ENCODE measurements at regions of chr9 and their contacts with region 1.

Region 1: GRCh38 chr9:137672907-137673791 is 54.3 kb downstream of the EHMT1 start:
- DNase-seq: peak in 7 of 9 donors; percentile 34 to 70 (median 59)
- ATAC-seq: peak; percentile 88
- H3K4me3 ChIP-seq: no peak overlapping the region
- H3K4me3 Mint-ChIP-seq: peak overlapping the region in 2 of 10 donors; percentile 29 to 37
- H3K27ac ChIP-seq: no peak overlapping the region
- H3K27ac Mint-ChIP-seq: peak overlapping the region in 5 of 9 donors; percentile 11 to 73 (median 28)
- H3K4me1 ChIP-seq: peaks cover 9 to 13% of the 10 kb centered on the region in 2 donors
- H3K4me1 Mint-ChIP-seq: peaks cover 29 to 68% (median 58%) of the 10 kb centered on the region in 7 donors
- H3K27me3 ChIP-seq: no peaks in the 10 kb centered on the region
- H3K27me3 Mint-ChIP-seq: no peaks in the 10 kb centered on the region

Region 2: DNA sequence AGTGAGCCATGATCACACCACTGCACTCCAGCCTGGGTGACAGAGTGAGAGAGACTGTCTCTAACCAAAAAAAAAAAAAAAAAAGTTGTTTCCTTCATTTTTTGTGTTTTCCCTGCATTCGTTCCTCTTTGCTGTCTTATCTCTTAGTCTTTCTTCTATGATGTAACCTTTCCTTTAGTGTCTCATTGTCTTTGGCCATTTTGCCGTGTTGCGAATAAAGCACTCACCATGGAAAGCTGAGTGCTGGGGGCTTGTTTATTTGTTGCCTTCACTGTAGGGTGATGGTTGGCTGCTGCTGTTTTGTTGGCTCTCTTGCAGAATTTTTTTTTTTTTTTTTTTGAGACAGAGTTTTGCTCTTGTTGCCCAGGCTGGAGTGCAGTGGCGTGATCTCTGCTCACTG is 46.7 kb before region 1 on chr9:
- CTCF ChIA-PET with region 1: interaction called, 4 read pairs
- POLR2A ChIA-PET with region 1: no interaction called
- intact Hi-C with region 1: loop called in 1 of 2 experiments (anchors 5 kb)
- DNase-seq: no peak
- ATAC-seq: no peak
- H3K4me3 ChIP-seq: no peak overlapping the region
- H3K4me3 Mint-ChIP-seq: peak overlapping the region; percentile 15 to 73 (median 50)
- H3K27ac ChIP-seq: no peak overlapping the region
- H3K27ac Mint-ChIP-seq: peak overlapping the region in 7 of 9 donors; percentile 25 to 91 (median 73)
- H3K4me1 ChIP-seq: peaks cover 10 to 51% of the 10 kb centered on the region in 2 donors
- H3K4me1 Mint-ChIP-seq: peaks cover 37 to 76% (median 52%) of the 10 kb centered on the region in 7 donors
- H3K27me3 ChIP-seq: no peaks in the 10 kb centered on the region
- H3K27me3 Mint-ChIP-seq: no peaks in the 10 kb centered on the region

Region 3: DNA sequence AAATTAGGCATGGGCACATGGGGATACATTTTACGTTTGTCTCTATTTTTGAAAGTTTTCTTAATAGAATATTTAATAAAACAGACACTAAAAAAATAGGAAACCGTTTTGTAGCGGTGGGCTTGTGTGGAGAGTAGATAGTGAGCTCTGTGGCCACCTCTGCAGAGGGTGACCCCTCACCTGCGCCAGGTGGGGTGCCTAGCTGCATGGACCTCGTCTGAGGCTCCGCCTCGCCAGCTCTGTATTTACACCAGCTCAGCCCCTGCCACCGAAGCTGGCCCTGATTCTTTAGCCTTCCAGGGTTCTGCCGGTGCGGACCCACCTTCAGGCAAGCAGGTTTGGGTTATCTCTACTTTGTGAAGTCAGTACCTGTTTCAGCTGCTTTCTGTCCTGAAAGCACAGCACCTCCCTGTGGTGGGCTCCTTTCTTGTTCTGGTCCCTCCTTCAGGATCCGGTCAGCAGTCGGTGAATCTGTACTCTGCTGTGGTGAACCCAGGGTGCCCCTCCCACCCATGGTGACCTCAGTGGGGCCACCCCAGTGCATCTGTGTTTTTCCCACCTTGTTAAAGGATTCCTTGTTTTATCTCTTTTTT is 99.2 kb after region 1 on chr9:
- CTCF ChIA-PET with region 1: interaction called, 4 read pairs
- POLR2A ChIA-PET with region 1: no interaction called
- intact Hi-C with region 1: loop called (anchors 2 to 10 kb)
- DNase-seq: no peak
- ATAC-seq: no peak
- H3K4me3 ChIP-seq: no peak overlapping the region
- H3K4me3 Mint-ChIP-seq: no peak overlapping the region
- H3K27ac ChIP-seq: no peak overlapping the region
- H3K27ac Mint-ChIP-seq: peak overlapping the region in 2 of 9 donors; percentile 32 to 42
- H3K4me1 ChIP-seq: no peaks in the 10 kb centered on the region
- H3K4me1 Mint-ChIP-seq: peaks cover 0 to 18% (median 11%) of the 10 kb centered on the region in 7 donors
- H3K27me3 ChIP-seq: no peaks in the 10 kb centered on the region
- H3K27me3 Mint-ChIP-seq: no peaks in the 10 kb centered on the region

Region 4: GRCh38 chr9:138112791-138113600 is 439.8 kb after region 1 on chr9:
- CTCF ChIA-PET with region 1: no interaction called
- POLR2A ChIA-PET with region 1: no interaction called
- intact Hi-C with region 1: loop called in 1 of 2 experiments (anchors 5 kb)
- DNase-seq: no peak
- ATAC-seq: no peak
- H3K4me3 ChIP-seq: no peak overlapping the region
- H3K4me3 Mint-ChIP-seq: no peak overlapping the region
- H3K27ac ChIP-seq: no peak overlapping the region
- H3K27ac Mint-ChIP-seq: no peak overlapping the region
- H3K4me1 ChIP-seq: no peaks in the 10 kb centered on the region
- H3K4me1 Mint-ChIP-seq: no peaks in the 10 kb centered on the region
- H3K27me3 ChIP-seq: no peaks in the 10 kb centered on the region
- H3K27me3 Mint-ChIP-seq: peaks cover 0 to 21% (median 5%) of the 10 kb centered on the region in 5 donors